ENCODE measurements at regions of chr19 and their contacts with region 1.

Region 1: DNA sequence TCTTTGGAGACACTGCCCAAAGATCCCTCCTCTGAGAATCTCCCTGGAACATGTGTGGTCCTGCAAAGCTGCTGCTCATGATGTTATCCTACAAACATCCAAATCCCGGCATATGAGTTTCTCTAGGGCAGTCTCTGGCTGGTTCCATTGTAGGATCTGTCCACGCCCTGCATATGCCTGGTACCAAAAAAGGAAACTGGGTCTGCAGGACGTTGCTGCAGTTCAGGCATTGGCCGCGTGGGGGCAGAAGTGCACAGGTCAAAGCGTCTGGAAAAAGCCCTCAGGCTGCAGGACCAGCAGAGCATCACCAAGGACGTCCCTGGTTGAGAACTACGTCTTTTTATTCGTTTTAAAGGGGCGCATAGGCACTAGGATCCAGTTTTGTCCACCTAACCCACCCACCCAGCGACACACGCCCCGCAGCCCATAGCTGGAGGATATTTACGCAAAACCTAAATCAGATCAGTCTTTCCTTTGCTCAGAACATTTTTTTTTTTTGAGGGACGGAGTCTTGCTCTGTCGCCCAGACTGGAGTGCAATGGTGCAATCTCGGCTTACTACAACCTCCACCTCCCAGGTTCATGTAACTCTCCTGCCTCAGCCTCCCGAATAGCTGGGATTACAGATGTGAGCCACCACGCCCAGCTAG is 12.9 kb upstream of the ZNF564 start:
- DNase-seq: peak; percentile 82 to 90
- H3K4me3 ChIP-seq: no peak overlapping the region
- H3K4me3 Mint-ChIP-seq: no peak overlapping the region
- H3K27ac Mint-ChIP-seq: no peak overlapping the region
- H3K4me1 ChIP-seq: no peaks in the 10 kb centered on the region
- H3K4me1 Mint-ChIP-seq: no peaks in the 10 kb centered on the region
- H3K27me3 ChIP-seq: no peaks in the 10 kb centered on the region
- H3K27me3 Mint-ChIP-seq: no peaks in the 10 kb centered on the region
- CTCF ChIP-seq: peak; percentile 80 to 82

Region 2: DNA sequence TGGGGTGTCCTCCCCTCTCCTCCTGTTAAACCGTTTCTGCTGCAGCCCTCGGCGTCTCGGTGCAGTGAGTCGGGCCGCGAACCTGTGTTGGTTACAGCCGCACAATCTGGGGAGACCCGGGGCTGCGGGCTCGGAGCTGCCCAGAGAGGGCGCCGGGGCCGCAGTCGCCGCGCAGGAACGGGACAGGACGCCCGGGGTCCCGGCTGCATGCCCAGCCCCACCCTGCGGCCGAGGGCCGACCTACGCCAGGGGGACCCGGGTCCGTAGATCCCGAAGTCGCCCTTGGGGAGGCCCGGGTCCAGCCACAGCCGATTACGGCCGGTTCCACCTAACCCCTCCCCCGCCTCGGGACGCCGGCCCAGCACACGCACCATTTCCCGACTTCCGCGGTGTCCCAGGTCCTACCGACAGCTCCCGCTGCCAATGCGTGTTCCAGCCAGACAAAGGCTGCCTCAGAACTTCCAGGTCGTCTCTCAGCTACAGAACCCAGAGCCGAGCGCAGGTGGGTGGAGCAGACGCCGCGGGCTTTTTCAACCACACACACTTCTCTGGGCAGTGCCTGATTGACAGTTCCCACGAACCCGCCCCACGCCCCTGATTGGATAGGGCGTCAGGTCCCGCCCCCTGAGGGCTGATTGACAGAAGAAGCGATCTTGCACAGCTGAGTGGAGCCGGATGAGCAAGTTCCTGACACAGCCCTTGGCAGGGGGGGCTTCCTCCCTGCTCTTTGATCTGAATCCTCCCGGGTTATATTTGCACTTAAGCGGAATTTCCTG is 123.4 kb before region 1 on chr19 and contains the start of gene ZNF443:
- CTCF ChIA-PET with region 1: no interaction called
- POLR2A ChIA-PET with region 1: no interaction called
- intact Hi-C with region 1: no loop called
- DNase-seq: peak; percentile 99
- H3K4me3 ChIP-seq: peak within 1 kb of the TSS; percentile 80
- H3K4me3 Mint-ChIP-seq: peak within 1 kb of the TSS; percentile 99
- H3K27ac Mint-ChIP-seq: peak within 1 kb of the TSS; percentile 97
- H3K4me1 ChIP-seq: no peaks in the 10 kb centered on the region
- H3K4me1 Mint-ChIP-seq: no peaks in the 10 kb centered on the region
- H3K27me3 ChIP-seq: no peaks in the 10 kb centered on the region
- H3K27me3 Mint-ChIP-seq: no peaks in the 10 kb centered on the region
- CTCF ChIP-seq: no peak
- total RNA-seq, gene ZNF443: 5.1 and 6.1 TPM in 2 replicates

Region 3: GRCh38 chr19:12672744-12673143 is 108.6 kb after region 1 on chr19:
- CTCF ChIA-PET with region 1: no interaction called
- POLR2A ChIA-PET with region 1: no interaction called
- intact Hi-C with region 1: loop called (anchors 1 kb)
- DNase-seq: no peak
- H3K4me3 ChIP-seq: no peak overlapping the region
- H3K4me3 Mint-ChIP-seq: no peak overlapping the region
- H3K27ac Mint-ChIP-seq: no peak overlapping the region
- H3K4me1 ChIP-seq: peaks cover 6% of the 10 kb centered on the region; the same call in 1 of the 2 replicates
- H3K4me1 Mint-ChIP-seq: no peaks in the 10 kb centered on the region
- H3K27me3 ChIP-seq: no peaks in the 10 kb centered on the region
- H3K27me3 Mint-ChIP-seq: no peaks in the 10 kb centered on the region
- CTCF ChIP-seq: no peak

Region 4: DNA sequence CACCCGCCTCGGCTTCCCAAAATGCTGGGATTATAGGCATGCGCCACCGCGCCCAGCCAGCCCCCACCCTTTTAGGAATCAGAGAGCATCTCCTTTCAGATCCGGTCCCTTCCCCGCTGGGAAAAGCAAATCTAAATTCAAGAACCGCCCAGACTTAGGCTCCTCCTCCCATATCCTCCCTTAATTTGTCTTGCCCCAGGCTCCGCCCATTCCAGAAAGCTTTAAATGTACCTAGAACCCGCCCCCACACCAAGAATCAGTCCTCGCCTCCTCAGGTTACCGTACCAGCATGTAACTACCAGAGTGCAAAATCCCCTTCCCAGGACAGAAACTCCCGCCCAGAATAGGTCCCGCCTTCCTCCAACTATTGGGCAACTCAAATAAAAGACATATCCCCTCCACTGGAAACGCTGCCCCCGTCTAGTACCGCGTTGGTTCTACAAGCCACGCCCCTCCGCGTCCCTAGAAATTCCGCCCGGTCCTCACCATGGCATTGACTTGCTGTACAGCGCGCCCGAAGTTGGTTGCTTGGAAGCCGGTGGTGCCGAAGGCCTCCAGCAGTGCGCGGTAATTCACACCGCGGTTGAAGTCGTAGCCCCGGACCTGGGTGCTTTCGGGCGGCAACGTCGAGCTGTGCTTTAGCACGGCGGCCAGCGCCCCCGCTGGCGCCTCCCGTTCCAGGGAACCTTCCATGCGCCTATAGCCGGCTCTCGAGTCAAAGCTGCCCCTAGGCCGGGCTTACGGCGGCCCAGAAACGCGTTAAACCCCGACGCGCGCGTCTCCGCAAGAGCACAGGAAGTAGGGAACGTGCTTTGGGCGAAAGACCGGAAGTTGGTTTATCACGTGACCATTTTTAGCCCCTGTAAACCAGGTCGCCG is 117.2 kb after region 1 on chr19 and contains the start of gene DHPS:
- CTCF ChIA-PET with region 1: no interaction called
- POLR2A ChIA-PET with region 1: interaction called, 12 read pairs
- intact Hi-C with region 1: no loop called
- DNase-seq: peak; percentile 91 to 96
- H3K4me3 ChIP-seq: peak within 1 kb of the TSS; percentile 92
- H3K4me3 Mint-ChIP-seq: peak within 1 kb of the TSS; percentile 83
- H3K27ac Mint-ChIP-seq: peak within 1 kb of the TSS; percentile 87
- H3K4me1 ChIP-seq: no peaks in the 10 kb centered on the region
- H3K4me1 Mint-ChIP-seq: peaks cover 2% of the 10 kb centered on the region
- H3K27me3 ChIP-seq: no peaks in the 10 kb centered on the region
- H3K27me3 Mint-ChIP-seq: no peaks in the 10 kb centered on the region
- CTCF ChIP-seq: no peak
- total RNA-seq, gene DHPS: 76.3 and 76.4 TPM in 2 replicates

Measured in Caco-2 (cell line).